ENCODE measurements at regions of chr14 and their contacts with region 1.

Region 1: GRCh38 chr14:53152890-53153701 is at the start of gene DDHD1:
- DNase-seq: peak; percentile 82 to 89 (median 86)
- H3K4me3 ChIP-seq: peak within 1 kb of the TSS; percentile 53
- H3K4me3 Mint-ChIP-seq: peak within 1 kb of the TSS; percentile 97 to 100 (median 99)
- H3K27ac ChIP-seq: peak within 1 kb of the TSS; percentile 75
- H3K27ac Mint-ChIP-seq: peak within 1 kb of the TSS; percentile 97 to 100 (median 99)
- H3K4me1 ChIP-seq: peaks cover 41% of the 10 kb centered on the region
- H3K4me1 Mint-ChIP-seq: peaks cover 48 to 53% (median 53%) of the 10 kb centered on the region in 3 donors
- H3K27me3 ChIP-seq: no peaks in the 10 kb centered on the region
- H3K27me3 Mint-ChIP-seq: peaks cover 0 to 8% of the 10 kb centered on the region in 2 donors
- total RNA-seq, gene DDHD1: 51.8 to 53.8 TPM

Region 2: GRCh38 chr14:53109105-53110041 is 43.7 kb before region 1 on chr14:
- CTCF ChIA-PET with region 1: interaction called, 23 read pairs
- POLR2A ChIA-PET with region 1: interaction called, 40 read pairs
- DNase-seq: peak; percentile 11 to 60 (median 58)
- H3K4me3 ChIP-seq: peak overlapping the region; percentile 64
- H3K4me3 Mint-ChIP-seq: no peak overlapping the region
- H3K27ac ChIP-seq: peak overlapping the region; percentile 38
- H3K27ac Mint-ChIP-seq: no peak overlapping the region
- H3K4me1 ChIP-seq: peaks cover 30% of the 10 kb centered on the region
- H3K4me1 Mint-ChIP-seq: peaks cover 7 to 24% (median 17%) of the 10 kb centered on the region in 3 donors
- H3K27me3 ChIP-seq: no peaks in the 10 kb centered on the region
- H3K27me3 Mint-ChIP-seq: no peaks in the 10 kb centered on the region

Region 3: GRCh38 chr14:53217295-53217994 is 64.3 kb after region 1 on chr14:
- CTCF ChIA-PET with region 1: interaction called, 12 read pairs
- POLR2A ChIA-PET with region 1: interaction called, 11 read pairs
- DNase-seq: peak; percentile 55 to 78 (median 63)
- H3K4me3 ChIP-seq: peak overlapping the region; percentile 55
- H3K4me3 Mint-ChIP-seq: peak overlapping the region; percentile 74 to 96 (median 87)
- H3K27ac ChIP-seq: no peak overlapping the region
- H3K27ac Mint-ChIP-seq: peak overlapping the region in 7 of 8 donors; percentile 32 to 93 (median 78)
- H3K4me1 ChIP-seq: peaks cover 5% of the 10 kb centered on the region
- H3K4me1 Mint-ChIP-seq: peaks cover 6 to 10% (median 7%) of the 10 kb centered on the region in 3 donors
- H3K27me3 ChIP-seq: no peaks in the 10 kb centered on the region
- H3K27me3 Mint-ChIP-seq: no peaks in the 10 kb centered on the region